Right ventricle myocardium inferior (tissue), 1 donor: ENCODE measurements at regions of chr4 and their contacts with region 1.

Region 1: GRCh38 chr4:154506253-154506652 is 14.7 kb upstream of the DCHS2 start:
- DNase-seq: no peak
- ATAC-seq: no peak

Region 2: GRCh38 chr4:154399259-154399974 is 106.8 kb before region 1 on chr4:
- intact Hi-C with region 1: loop called (anchors 5 kb)
- DNase-seq: no peak
- ATAC-seq: no peak